ENCODE measurements at regions of chr17 and their contacts with region 1.

Region 1: GRCh38 chr17:78013683-78014467 is 55.4 kb downstream of the TNRC6C start:
- DNase-seq: no peak
- ATAC-seq: peak; percentile 80

Region 2: GRCh38 chr17:77542551-77543490 is 471.1 kb before region 1 on chr17:
- intact Hi-C with region 1: loop called (anchors 5 kb)
- DNase-seq: peak; percentile 86
- ATAC-seq: peak; percentile 96

Region 3: GRCh38 chr17:77772461-77772897 is 241.4 kb before region 1 on chr17:
- intact Hi-C with region 1: loop called (anchors 5 kb)
- DNase-seq: peak; percentile 76
- ATAC-seq: peak; percentile 92

Region 4: GRCh38 chr17:77914385-77915254 is 99.3 kb before region 1 on chr17:
- intact Hi-C with region 1: loop called (anchors 10 kb)
- DNase-seq: no peak
- ATAC-seq: peak; percentile 49

Region 5: GRCh38 chr17:78058001-78058400 is 44.1 kb after region 1 on chr17:
- intact Hi-C with region 1: no loop called
- DNase-seq: no peak
- ATAC-seq: peak; percentile 63

Measured in Right ventricle myocardium superior (tissue), 1 donor.